Testis (tissue), 5 donors: ENCODE measurements at regions of chr18 and their contacts with region 1.

Region 1: GRCh38 chr18:3245853-3246634 is 1.6 kb upstream of the MYL12A start:
- DNase-seq: peak; percentile 95
- H3K4me3 ChIP-seq: peak overlapping the region; percentile 77 to 93
- H3K27ac ChIP-seq: peak overlapping the region; percentile 94 to 97
- H3K4me1 ChIP-seq: peaks cover 24% of the 10 kb centered on the region
- H3K27me3 ChIP-seq: no peaks in the 10 kb centered on the region
- CTCF ChIP-seq: peak; percentile 85 to 93 (median 87)
- POLR2A ChIP-seq: no peak

Region 2: GRCh38 chr18:2932247-2933181 is 313.5 kb before region 1 on chr18:
- intact Hi-C with region 1: loop called (anchors 10 kb)
- DNase-seq: peak; percentile 62
- H3K4me3 ChIP-seq: no peak overlapping the region
- H3K27ac ChIP-seq: no peak overlapping the region
- H3K4me1 ChIP-seq: peaks cover 6% of the 10 kb centered on the region
- H3K27me3 ChIP-seq: no peaks in the 10 kb centered on the region
- CTCF ChIP-seq: peak; percentile 64 to 83 (median 67)
- POLR2A ChIP-seq: no peak

Region 3: GRCh38 chr18:3012964-3013804 is 232.9 kb before region 1 on chr18 and contains the start of gene LPIN2:
- intact Hi-C with region 1: loop called (anchors 10 kb)
- DNase-seq: peak; percentile 99
- H3K4me3 ChIP-seq: peak within 1 kb of the TSS; percentile 83 to 94
- H3K27ac ChIP-seq: peak within 1 kb of the TSS; percentile 96 to 99
- H3K4me1 ChIP-seq: peaks cover 16% of the 10 kb centered on the region
- H3K27me3 ChIP-seq: no peaks in the 10 kb centered on the region
- CTCF ChIP-seq: no peak
- POLR2A ChIP-seq: no peak
- total RNA-seq, gene LPIN2: 109 to 141 TPM

Region 4: GRCh38 chr18:3151399-3152264 is 94.4 kb before region 1 on chr18:
- intact Hi-C with region 1: loop called (anchors 10 kb)
- DNase-seq: no peak
- H3K4me3 ChIP-seq: no peak overlapping the region
- H3K27ac ChIP-seq: no peak overlapping the region
- H3K4me1 ChIP-seq: peaks cover 8% of the 10 kb centered on the region
- H3K27me3 ChIP-seq: no peaks in the 10 kb centered on the region
- CTCF ChIP-seq: peak in 2 of 3 experiments; percentile 61 to 77
- POLR2A ChIP-seq: no peak

Region 5: DNA sequence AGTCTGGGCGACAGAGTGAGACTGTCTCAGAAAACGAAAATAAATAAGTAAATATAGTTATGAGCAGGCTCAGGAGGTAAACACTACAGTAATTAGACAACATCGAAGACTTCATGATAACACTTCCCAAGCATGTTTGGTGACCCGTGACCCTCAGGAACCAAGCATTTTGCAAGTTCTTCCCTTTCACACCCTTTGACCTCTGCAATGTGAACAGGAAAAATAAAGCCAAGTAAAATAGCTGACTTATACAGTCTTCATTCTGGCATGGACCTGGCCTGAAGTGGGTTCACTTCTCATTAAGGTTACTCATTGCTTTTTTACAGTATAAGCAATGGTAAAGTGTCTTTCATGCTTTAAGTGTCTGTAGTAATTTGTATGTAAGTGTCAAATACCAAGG is 188.6 kb after region 1 on chr18:
- intact Hi-C with region 1: no loop called
- DNase-seq: no peak
- H3K4me3 ChIP-seq: no peak overlapping the region
- H3K27ac ChIP-seq: no peak overlapping the region
- H3K4me1 ChIP-seq: no peaks in the 10 kb centered on the region
- H3K27me3 ChIP-seq: no peaks in the 10 kb centered on the region
- CTCF ChIP-seq: no peak
- POLR2A ChIP-seq: no peak